ENCODE measurements at regions of chr3 and their contacts with region 1.

Region 1: DNA sequence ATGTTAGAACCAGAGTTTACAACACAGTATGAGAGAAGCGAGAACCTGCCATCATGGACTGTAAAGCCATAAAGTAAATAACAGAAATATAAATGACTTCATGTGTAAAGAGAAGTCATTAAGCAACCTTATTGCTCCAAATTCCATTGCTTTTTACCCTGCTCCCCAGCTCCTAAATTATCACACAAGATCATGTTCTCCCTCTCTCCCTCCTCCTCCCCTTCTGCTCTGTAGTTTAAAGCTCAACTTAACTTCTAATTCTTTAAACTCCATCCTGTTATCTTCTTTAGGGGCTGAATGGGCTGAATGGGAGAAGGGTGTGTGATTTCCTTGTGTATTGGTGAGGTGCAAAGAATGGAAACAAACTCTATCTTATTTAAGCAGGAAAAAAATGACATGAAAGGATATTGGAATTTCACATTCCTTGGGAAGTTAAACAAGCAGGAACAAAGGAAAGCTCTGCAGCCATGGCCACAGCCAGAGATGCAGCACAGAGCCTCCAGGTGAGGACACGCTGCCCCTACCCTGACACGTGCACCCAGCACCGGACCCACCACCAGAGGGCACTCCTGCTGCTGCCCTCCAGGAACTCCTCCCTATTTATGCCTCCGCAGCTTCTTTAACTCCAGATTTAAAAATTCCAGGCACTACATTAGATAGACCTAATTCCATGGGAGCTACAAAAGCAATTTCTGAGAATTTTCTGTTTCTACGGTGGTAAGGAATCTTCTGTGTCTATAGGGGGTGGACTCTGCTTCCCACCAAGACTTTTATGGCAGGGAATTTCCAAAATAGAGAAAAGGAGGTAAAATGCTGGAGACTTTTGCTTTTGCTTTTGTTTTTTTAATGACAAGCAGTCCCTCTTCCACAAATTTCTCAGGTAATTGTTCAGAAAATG is 76.9 kb upstream of the ABI3BP start:
- DNase-seq: peak; percentile 52
- CTCF ChIP-seq: peak; percentile 66

Region 2: DNA sequence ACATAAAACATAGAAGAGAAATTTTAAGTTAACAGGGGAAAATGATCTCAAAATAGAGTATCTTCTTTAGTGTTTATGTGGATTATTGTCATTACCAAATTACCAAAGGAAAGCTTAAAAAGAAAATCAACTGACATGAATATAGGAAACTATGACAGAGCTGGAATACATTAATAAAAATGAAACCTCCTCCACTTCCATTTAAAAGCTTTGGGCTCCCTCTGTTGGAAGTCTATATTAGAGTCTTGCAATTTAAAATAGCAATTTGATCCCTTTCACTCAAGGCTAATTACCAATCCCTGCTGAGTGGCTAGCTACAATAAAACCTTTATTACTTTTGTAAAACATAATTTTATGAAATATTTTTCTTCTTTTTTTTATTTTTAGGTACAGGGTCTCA is 311.7 kb after region 1 on chr3:
- CTCF ChIA-PET with region 1: interaction called, 13 read pairs
- POLR2A ChIA-PET with region 1: no interaction called
- DNase-seq: peak; percentile 15
- CTCF ChIP-seq: peak; percentile 34

Measured in GM10248 (cell line).